CD4-positive, alpha-beta memory T cell (primary cell): ENCODE measurements at regions of chr19 and their contacts with region 1.

Region 1: GRCh38 chr19:54137086-54137921 is at the start of gene CNOT3:
- DNase-seq: peak; percentile 99 to 100 (median 100)
- H3K4me3 ChIP-seq: peak within 1 kb of the TSS; percentile 73 to 87
- H3K4me3 Mint-ChIP-seq: peak within 1 kb of the TSS; percentile 89 to 93 (median 90)
- H3K27ac ChIP-seq: peak within 1 kb of the TSS; percentile 91
- H3K27ac Mint-ChIP-seq: peak within 1 kb of the TSS; percentile 91 to 94 (median 94)
- H3K4me1 ChIP-seq: peaks cover 43% of the 10 kb centered on the region
- H3K4me1 Mint-ChIP-seq: peaks cover 29 to 56% (median 43%) of the 10 kb centered on the region in 4 donors
- H3K27me3 ChIP-seq: no peaks in the 10 kb centered on the region
- H3K27me3 Mint-ChIP-seq: no peaks in the 10 kb centered on the region
- total RNA-seq, gene CNOT3: 80.0 to 82.3 TPM

Region 2: GRCh38 chr19:53867225-53868090 is 269.8 kb before region 1 on chr19 and contains the start of gene MYADM:
- CTCF ChIA-PET with region 1: no interaction called
- POLR2A ChIA-PET with region 1: interaction called, 7 read pairs
- intact Hi-C with region 1: loop called (anchors 1 kb)
- DNase-seq: peak; percentile 100
- H3K4me3 ChIP-seq: peak within 1 kb of the TSS; percentile 85 to 90
- H3K4me3 Mint-ChIP-seq: peak within 1 kb of the TSS; percentile 95 to 99 (median 98)
- H3K27ac ChIP-seq: peak within 1 kb of the TSS; percentile 100
- H3K27ac Mint-ChIP-seq: peak within 1 kb of the TSS; percentile 99 to 100 (median 100)
- H3K4me1 ChIP-seq: peaks cover 30% of the 10 kb centered on the region
- H3K4me1 Mint-ChIP-seq: peaks cover 20 to 60% (median 28%) of the 10 kb centered on the region in 4 donors
- H3K27me3 ChIP-seq: no peaks in the 10 kb centered on the region
- H3K27me3 Mint-ChIP-seq: no peaks in the 10 kb centered on the region
- total RNA-seq, gene MYADM: 42.1 to 45.8 TPM

Region 3: GRCh38 chr19:54102421-54103169 is 34.7 kb before region 1 on chr19 and contains the start of gene NDUFA3:
- CTCF ChIA-PET with region 1: no interaction called
- POLR2A ChIA-PET with region 1: interaction called, 29 read pairs
- intact Hi-C with region 1: loop called (anchors 1 kb)
- DNase-seq: peak; percentile 96 to 99 (median 98)
- H3K4me3 ChIP-seq: peak within 1 kb of the TSS; percentile 54 to 83
- H3K4me3 Mint-ChIP-seq: peak within 1 kb of the TSS; percentile 95 to 100 (median 97)
- H3K27ac ChIP-seq: peak within 1 kb of the TSS; percentile 65
- H3K27ac Mint-ChIP-seq: peak within 1 kb of the TSS; percentile 81 to 98 (median 96)
- H3K4me1 ChIP-seq: peaks cover 17% of the 10 kb centered on the region
- H3K4me1 Mint-ChIP-seq: peaks cover 14 to 29% (median 19%) of the 10 kb centered on the region in 4 donors
- H3K27me3 ChIP-seq: no peaks in the 10 kb centered on the region
- H3K27me3 Mint-ChIP-seq: no peaks in the 10 kb centered on the region
- total RNA-seq, gene NDUFA3: 135 to 137 TPM

Region 4: DNA sequence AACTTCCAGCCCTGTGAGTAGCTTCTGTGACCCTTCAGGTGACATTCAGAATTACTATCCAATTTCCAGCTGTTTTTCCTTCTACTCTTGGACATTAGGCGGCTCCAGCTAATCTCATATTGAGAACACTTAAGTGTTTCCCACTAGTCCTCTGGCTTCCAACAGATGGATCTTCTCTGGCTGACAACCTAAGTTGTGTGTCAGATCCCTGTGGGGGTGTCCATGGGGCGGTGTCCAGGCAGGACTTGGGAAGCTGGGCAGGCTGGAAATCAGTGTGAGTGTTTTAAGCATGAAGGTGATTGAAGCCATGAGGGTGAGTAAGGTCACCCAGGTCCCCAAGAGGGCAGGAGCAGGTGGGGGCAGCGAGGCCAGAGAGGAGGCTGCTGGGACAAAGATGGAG is 10.4 kb after region 1 on chr19:
- CTCF ChIA-PET with region 1: interaction called, 4 read pairs
- POLR2A ChIA-PET with region 1: interaction called, 46 read pairs
- intact Hi-C with region 1: no loop called
- DNase-seq: no peak
- H3K4me3 ChIP-seq: no peak overlapping the region
- H3K4me3 Mint-ChIP-seq: no peak overlapping the region
- H3K27ac ChIP-seq: no peak overlapping the region
- H3K27ac Mint-ChIP-seq: peak overlapping the region in 1 of 7 donors; percentile 68
- H3K4me1 ChIP-seq: peaks cover 2% of the 10 kb centered on the region
- H3K4me1 Mint-ChIP-seq: peaks cover 0 to 5% (median 4%) of the 10 kb centered on the region in 4 donors
- H3K27me3 ChIP-seq: no peaks in the 10 kb centered on the region
- H3K27me3 Mint-ChIP-seq: no peaks in the 10 kb centered on the region

Region 5: GRCh38 chr19:54168174-54168917 is 31.0 kb after region 1 on chr19:
- CTCF ChIA-PET with region 1: interaction called, 5 read pairs
- POLR2A ChIA-PET with region 1: interaction called, 11 read pairs
- intact Hi-C with region 1: no loop called
- DNase-seq: peak; percentile 79 to 83 (median 81)
- H3K4me3 ChIP-seq: no peak overlapping the region
- H3K4me3 Mint-ChIP-seq: peak overlapping the region in 2 of 8 donors; percentile 26 to 31
- H3K27ac ChIP-seq: no peak overlapping the region
- H3K27ac Mint-ChIP-seq: peak overlapping the region in 2 of 7 donors; percentile 41 to 58
- H3K4me1 ChIP-seq: peaks cover 23% of the 10 kb centered on the region
- H3K4me1 Mint-ChIP-seq: peaks cover 3 to 28% (median 11%) of the 10 kb centered on the region in 4 donors
- H3K27me3 ChIP-seq: no peaks in the 10 kb centered on the region
- H3K27me3 Mint-ChIP-seq: no peaks in the 10 kb centered on the region

Region 6: DNA sequence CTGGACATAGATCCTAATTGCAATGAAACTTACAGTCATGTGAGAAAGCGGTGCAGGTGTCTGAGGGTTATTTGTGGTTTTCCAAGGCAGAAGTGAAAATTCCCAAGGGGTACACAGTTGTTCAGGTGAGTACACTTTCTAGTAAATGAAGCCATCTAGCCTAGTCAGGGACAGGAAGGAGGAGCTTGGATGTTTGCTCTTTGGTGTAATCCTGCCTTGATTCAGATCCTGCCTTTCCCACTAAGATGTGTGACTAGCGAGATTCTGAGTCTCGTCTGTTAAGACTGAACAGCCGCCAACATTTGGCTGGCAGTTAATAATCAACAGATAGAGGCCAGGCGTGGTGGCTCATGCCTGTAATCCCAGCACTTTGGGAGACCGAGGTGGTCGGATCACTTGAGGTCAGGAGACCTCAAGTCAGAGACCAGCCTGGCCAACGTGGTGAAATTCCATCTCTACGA is 65.9 kb after region 1 on chr19:
- CTCF ChIA-PET with region 1: no interaction called
- POLR2A ChIA-PET with region 1: interaction called, 20 read pairs
- intact Hi-C with region 1: no loop called
- DNase-seq: no peak
- H3K4me3 ChIP-seq: no peak overlapping the region
- H3K4me3 Mint-ChIP-seq: peak overlapping the region; percentile 10 to 100 (median 64)
- H3K27ac ChIP-seq: peak overlapping the region; percentile 89
- H3K27ac Mint-ChIP-seq: peak overlapping the region in 6 of 7 donors; percentile 66 to 99 (median 85)
- H3K4me1 ChIP-seq: peaks cover 74% of the 10 kb centered on the region
- H3K4me1 Mint-ChIP-seq: peaks cover 44 to 86% (median 62%) of the 10 kb centered on the region in 4 donors
- H3K27me3 ChIP-seq: no peaks in the 10 kb centered on the region
- H3K27me3 Mint-ChIP-seq: no peaks in the 10 kb centered on the region

Region 7: DNA sequence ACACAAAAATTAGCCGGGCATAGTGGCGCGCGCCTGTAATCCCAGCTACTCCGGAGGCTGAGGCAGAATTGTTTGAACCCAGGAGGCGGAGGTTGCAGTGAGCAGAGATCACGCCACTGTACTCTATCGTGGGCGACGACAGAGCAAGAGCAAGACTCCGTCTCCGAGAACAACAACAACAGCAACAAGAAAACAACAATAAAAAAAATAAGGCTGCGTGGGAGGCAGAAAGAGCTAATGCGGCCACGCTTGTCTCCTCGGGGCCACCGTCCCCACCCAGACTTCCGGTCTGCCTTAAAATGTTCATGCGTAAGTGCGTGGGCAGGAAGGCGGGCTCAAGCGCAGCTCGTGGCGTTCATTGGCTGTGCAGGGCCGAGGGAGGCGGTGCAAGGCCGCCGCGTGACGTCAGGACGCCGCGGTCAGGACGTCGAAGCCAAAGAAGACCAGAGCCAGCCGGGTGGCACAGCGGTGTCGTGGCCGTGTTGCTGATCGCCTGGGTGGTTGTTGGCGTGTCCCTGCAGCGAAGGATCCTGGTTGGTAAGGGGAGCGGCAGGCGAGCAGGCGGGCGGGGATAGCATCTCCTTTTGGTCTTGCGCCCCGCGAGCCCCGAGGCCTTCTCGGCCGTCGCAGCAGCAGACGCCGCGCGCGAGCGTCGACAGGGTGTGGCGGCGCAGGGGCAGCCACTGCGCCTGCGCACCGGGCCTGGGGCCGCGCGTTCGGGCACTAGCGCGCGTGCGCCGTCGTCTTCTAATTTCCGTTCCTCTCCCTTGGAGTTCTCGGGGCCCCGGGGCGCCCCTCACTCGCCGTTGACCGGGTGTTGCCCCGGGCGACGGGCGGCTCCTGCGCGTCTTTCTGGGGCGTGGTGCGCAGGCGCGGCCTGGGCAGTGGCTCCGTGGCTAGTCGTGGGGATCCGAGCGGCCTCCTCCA is 311.7 kb after region 1 on chr19 and contains the start of gene LENG8:
- CTCF ChIA-PET with region 1: no interaction called
- POLR2A ChIA-PET with region 1: interaction called, 16 read pairs
- intact Hi-C with region 1: no loop called
- DNase-seq: peak; percentile 98 to 99 (median 99)
- H3K4me3 ChIP-seq: peak within 1 kb of the TSS; percentile 75 to 98
- H3K4me3 Mint-ChIP-seq: peak within 1 kb of the TSS; percentile 91 to 100 (median 98)
- H3K27ac ChIP-seq: peak within 1 kb of the TSS; percentile 93
- H3K27ac Mint-ChIP-seq: peak within 1 kb of the TSS; percentile 96 to 100 (median 99)
- H3K4me1 ChIP-seq: peaks cover 46% of the 10 kb centered on the region
- H3K4me1 Mint-ChIP-seq: peaks cover 25 to 69% (median 41%) of the 10 kb centered on the region in 4 donors
- H3K27me3 ChIP-seq: no peaks in the 10 kb centered on the region
- H3K27me3 Mint-ChIP-seq: peaks cover 0 to 3% of the 10 kb centered on the region in 2 donors
- total RNA-seq, gene LENG8: 535 to 565 TPM